ENCODE measurements at regions of chr14 and their contacts with region 1.

Region 1: GRCh38 chr14:61475316-61475715 is 153.9 kb downstream of the PRKCH start:
- DNase-seq: peak in 1 of 2 donors; percentile 82
- ATAC-seq: no peak
- H3K4me3 ChIP-seq: no peak overlapping the region
- H3K4me3 Mint-ChIP-seq: peak overlapping the region; percentile 63
- H3K27ac ChIP-seq: peak overlapping the region; percentile 99
- H3K27ac Mint-ChIP-seq: no peak overlapping the region
- H3K4me1 ChIP-seq: peaks cover 80% of the 10 kb centered on the region
- H3K4me1 Mint-ChIP-seq: peaks cover 95% of the 10 kb centered on the region in 2 donors
- H3K27me3 ChIP-seq: no peaks in the 10 kb centered on the region
- H3K27me3 Mint-ChIP-seq: no peaks in the 10 kb centered on the region
- CTCF ChIP-seq: peak; percentile 77

Region 2: DNA sequence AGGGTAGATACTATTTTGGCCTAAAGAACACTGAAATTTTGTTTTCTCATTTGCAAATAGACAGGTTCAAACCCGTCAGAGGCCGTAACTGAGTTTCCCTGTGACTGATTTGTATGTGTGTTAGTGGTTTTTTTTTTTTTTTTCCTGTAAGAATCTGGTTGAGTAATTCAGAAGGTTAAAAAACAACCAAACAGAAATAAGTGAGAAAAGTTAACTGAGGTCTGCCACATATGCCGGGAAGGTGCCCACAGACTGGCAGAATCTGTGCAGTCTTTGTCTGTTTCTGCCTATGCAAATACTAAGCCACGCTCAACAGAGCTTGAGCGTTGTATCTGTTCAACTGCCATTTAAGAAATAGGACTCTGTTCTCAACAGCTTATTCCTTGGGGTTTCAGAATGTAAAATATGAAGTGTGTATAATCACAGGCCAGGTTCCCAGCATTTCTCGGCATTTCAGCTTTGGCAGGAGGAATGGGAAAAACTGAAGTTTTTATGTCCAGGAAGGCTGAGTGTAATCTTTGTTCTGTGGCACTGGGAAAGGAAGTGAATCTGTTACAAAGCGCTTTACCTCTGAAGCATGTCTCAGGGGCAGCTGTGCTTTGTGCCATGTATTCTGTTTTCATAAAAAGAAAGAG is 28.0 kb after region 1 on chr14:
- intact Hi-C with region 1: loop called (anchors 2 kb)
- DNase-seq: peak; percentile 54 to 84
- ATAC-seq: peak; percentile 80 to 86 (median 83)
- H3K4me3 ChIP-seq: peak overlapping the region; percentile 0
- H3K4me3 Mint-ChIP-seq: peak overlapping the region; percentile 87
- H3K27ac ChIP-seq: peak overlapping the region; percentile 69
- H3K27ac Mint-ChIP-seq: peak overlapping the region in 1 of 2 donors; percentile 93
- H3K4me1 ChIP-seq: peaks cover 42% of the 10 kb centered on the region
- H3K4me1 Mint-ChIP-seq: peaks cover 94 to 98% of the 10 kb centered on the region in 2 donors
- H3K27me3 ChIP-seq: no peaks in the 10 kb centered on the region
- H3K27me3 Mint-ChIP-seq: no peaks in the 10 kb centered on the region
- CTCF ChIP-seq: no peak

Region 3: DNA sequence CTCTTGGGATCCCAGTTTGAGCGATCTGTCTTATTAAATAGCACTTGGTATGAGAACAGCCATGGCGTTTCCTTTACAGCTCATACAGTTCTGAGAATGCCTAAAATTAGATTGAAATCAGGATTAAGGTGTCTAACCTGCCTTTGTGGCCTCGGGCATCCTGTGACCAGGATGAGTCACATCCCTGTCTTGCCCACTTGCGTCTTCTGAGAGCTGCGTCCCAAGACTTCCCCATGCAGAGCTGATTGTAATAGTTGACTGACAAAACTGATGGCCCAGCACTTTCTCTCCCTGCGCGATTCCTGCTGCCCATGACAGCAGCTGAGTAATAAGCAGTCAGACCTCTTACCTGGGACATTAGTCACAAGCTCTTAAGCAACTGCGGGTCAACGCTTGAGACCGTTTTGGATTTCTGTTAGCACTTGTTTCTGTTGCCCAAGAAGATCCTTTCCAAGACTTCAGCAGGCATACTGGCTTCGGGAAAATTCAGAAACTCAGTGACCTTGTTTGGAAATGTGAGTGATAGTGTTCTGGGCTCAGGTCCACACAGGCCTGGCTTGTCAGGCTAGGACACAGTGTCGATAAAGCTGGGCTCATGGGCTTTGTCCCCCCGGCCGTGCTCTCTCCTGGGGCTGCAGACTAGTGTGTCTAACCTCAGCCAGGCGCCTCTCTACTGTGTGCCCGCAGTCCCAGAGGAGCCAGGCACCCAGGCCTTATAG is 50.1 kb after region 1 on chr14:
- intact Hi-C with region 1: loop called (anchors 2 kb)
- DNase-seq: peak; percentile 31 to 67
- ATAC-seq: peak; percentile 10 to 59 (median 32)
- H3K4me3 ChIP-seq: no peak overlapping the region
- H3K4me3 Mint-ChIP-seq: peak overlapping the region; percentile 74
- H3K27ac ChIP-seq: peak overlapping the region; percentile 64
- H3K27ac Mint-ChIP-seq: peak overlapping the region in 1 of 2 donors; percentile 98
- H3K4me1 ChIP-seq: peaks cover 63% of the 10 kb centered on the region
- H3K4me1 Mint-ChIP-seq: peaks cover 81 to 84% of the 10 kb centered on the region in 2 donors
- H3K27me3 ChIP-seq: no peaks in the 10 kb centered on the region
- H3K27me3 Mint-ChIP-seq: no peaks in the 10 kb centered on the region
- CTCF ChIP-seq: no peak

Region 4: GRCh38 chr14:61598980-61599379 is 123.7 kb after region 1 on chr14:
- intact Hi-C with region 1: loop called (anchors 10 kb)
- DNase-seq: peak in 1 of 2 donors; percentile 16
- ATAC-seq: peak in 1 of 3 donors; percentile 26
- H3K4me3 ChIP-seq: no peak overlapping the region
- H3K4me3 Mint-ChIP-seq: no peak overlapping the region
- H3K27ac ChIP-seq: no peak overlapping the region
- H3K27ac Mint-ChIP-seq: no peak overlapping the region
- H3K4me1 ChIP-seq: peaks cover 13% of the 10 kb centered on the region
- H3K4me1 Mint-ChIP-seq: peaks cover 19 to 29% of the 10 kb centered on the region in 2 donors
- H3K27me3 ChIP-seq: no peaks in the 10 kb centered on the region
- H3K27me3 Mint-ChIP-seq: peaks cover 0 to 2% of the 10 kb centered on the region in 2 donors
- CTCF ChIP-seq: no peak

Region 5: GRCh38 chr14:61662437-61663311 is 187.4 kb after region 1 on chr14:
- intact Hi-C with region 1: loop called (anchors 5 kb)
- DNase-seq: peak; percentile 40 to 82
- ATAC-seq: peak; percentile 88 to 96 (median 95)
- H3K4me3 ChIP-seq: no peak overlapping the region
- H3K4me3 Mint-ChIP-seq: peak overlapping the region; percentile 76
- H3K27ac ChIP-seq: peak overlapping the region; percentile 84
- H3K27ac Mint-ChIP-seq: peak overlapping the region; percentile 91 to 96
- H3K4me1 ChIP-seq: peaks cover 42% of the 10 kb centered on the region
- H3K4me1 Mint-ChIP-seq: peaks cover 49 to 56% of the 10 kb centered on the region in 2 donors
- H3K27me3 ChIP-seq: no peaks in the 10 kb centered on the region
- H3K27me3 Mint-ChIP-seq: no peaks in the 10 kb centered on the region
- CTCF ChIP-seq: no peak